HEK293 (cell line): ENCODE measurements at regions of chr1 and their contacts with region 1.

Region 1: DNA sequence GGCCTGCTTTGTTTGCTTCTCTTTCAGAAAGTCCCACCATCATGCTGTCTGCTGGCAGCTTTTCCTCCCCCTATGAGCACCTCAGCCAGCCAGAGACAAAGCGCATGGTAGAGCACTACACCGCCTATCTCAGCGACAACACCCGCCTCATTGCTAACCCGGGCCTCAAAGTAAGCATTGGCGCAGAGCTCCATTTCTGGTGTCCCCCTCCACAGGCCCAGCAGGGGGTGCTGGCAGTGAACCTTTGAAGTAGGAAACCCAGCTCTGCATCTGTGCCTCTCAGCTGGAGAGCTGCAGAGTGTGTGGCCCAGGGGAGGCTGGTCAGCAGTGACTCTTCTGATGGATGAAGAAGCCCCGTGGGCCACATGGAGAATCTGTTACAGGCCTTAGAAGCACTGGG is 81.2 kb upstream of the RAVER2 start:
- H3K4me3 ChIP-seq: no peak overlapping the region
- H3K27ac ChIP-seq: no peak overlapping the region
- H3K4me1 ChIP-seq: no peaks in the 10 kb centered on the region
- CTCF ChIP-seq: 0 out of 2 replicates have a peak, but pooled peaks have one; percentile 28

Region 2: DNA sequence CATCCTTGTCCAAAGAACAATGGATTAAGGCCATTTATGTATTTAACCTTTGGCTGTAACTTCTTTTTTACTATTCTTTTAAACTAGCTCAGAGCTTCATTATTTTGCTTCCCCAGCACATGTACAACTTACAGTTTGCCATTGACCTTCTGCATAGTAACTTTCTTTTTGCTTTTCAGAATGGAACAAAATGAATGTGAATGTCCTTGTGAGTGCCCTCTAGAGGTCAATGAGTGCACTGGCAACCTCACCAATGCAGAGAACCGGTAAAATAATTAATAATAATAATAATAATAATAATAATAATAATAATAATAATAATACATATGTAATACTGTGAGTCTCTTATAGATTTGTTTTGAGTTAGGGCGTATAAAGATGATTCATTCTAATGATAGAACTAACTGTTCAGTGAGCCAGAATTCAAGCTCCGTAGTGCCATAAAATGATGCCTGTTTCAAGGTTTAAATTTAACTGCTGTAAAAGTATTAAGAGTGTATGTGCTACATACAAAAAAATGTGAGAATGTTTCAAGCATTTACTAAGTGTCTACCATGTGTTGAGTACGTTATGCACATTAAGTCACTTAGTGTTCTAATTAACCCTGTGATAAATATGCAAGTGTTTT is 12.2 kb after region 1 on chr1:
- CTCF ChIA-PET with region 1: interaction called, 21 read pairs
- POLR2A ChIA-PET with region 1: no interaction called
- H3K4me3 ChIP-seq: no peak overlapping the region
- H3K27ac ChIP-seq: no peak overlapping the region
- H3K4me1 ChIP-seq: no peaks in the 10 kb centered on the region
- CTCF ChIP-seq: no peak